ENCODE measurements at regions of chr7 and their contacts with region 1.

Region 1: DNA sequence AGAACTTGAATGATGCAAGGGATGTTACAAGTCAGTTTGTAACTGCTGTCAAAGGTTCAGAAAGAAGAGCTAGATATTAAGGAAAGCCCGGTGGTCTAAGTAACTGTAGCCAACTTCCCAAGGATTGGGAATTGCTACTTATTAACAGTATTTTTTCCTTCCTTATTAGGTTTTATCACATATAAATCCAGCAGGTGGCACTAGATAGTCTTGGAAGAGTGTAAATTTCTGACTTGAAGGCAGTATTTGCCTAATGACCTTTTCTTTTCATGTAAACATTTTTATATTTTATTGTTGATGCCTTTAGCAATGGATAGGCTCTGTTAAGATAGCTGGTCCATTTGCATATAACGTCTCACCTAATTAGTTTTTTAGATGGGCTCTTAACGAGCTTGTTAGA is 51.2 kb downstream of the ANLN start:
- DNase-seq: peak; percentile 38
- ATAC-seq: peak; percentile 55
- H3K4me3 ChIP-seq: no peak overlapping the region
- H3K27ac ChIP-seq: no peak overlapping the region
- H3K4me1 ChIP-seq: no peaks in the 10 kb centered on the region
- H3K27me3 ChIP-seq: no peaks in the 10 kb centered on the region
- CTCF ChIP-seq: peak; percentile 61

Region 2: GRCh38 chr7:36389371-36390198 is 51.3 kb before region 1 on chr7 and contains the start of gene ANLN:
- CTCF ChIA-PET with region 1: no interaction called
- POLR2A ChIA-PET with region 1: no interaction called
- intact Hi-C with region 1: no loop called
- DNase-seq: peak; percentile 94
- ATAC-seq: peak; percentile 68
- H3K4me3 ChIP-seq: peak within 1 kb of the TSS; percentile 90
- H3K27ac ChIP-seq: peak within 1 kb of the TSS; percentile 96
- H3K4me1 ChIP-seq: peaks cover 35% of the 10 kb centered on the region
- H3K27me3 ChIP-seq: no peaks in the 10 kb centered on the region
- CTCF ChIP-seq: no peak
- total RNA-seq, gene ANLN: 110 and 111 TPM in 2 replicates

Region 3: DNA sequence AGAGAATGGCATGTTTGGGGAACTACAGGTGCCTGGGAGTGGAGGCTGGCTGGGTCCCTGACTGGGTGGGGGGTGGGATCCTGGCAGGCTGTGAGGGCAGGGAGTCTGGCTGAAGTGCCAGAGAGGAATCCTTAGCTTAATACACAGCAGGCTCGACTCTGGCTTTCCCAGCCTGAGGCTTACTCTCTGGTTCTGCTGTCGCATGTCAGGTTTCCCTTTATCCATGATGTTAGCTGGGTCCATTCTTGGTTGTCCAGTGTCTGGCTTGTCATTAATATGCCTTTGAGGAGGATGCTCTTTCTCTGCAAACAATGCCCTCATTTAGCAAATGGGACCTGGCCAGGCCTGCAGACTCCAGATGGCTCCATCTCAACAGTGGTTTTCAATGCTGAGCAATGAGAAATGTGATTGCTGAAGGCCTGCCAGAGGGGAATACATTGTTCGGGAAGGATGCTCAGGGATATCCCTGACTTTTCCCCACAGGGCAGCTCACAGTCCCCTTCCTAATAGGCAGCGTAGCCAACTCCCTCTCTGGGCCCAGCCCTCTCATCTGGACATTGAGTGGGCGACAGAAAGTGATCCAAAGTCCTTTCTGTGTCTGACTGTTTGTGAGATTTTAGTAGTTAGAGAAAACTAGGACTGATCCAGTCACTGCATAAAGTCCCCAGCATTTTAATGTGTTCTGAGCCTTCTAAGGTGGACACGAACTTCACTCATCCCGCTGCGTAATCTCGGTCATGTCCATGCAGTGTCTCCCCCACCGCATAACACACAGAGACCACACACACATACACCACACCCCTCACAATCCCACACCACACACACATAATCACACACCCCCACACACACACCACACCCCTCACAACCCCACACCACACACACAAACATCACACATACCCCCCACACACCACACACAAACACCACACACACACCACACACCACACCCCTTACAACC is 73.7 kb after region 1 on chr7:
- CTCF ChIA-PET with region 1: no interaction called
- POLR2A ChIA-PET with region 1: no interaction called
- intact Hi-C with region 1: no loop called
- DNase-seq: no peak
- ATAC-seq: no peak
- H3K4me3 ChIP-seq: no peak overlapping the region
- H3K27ac ChIP-seq: no peak overlapping the region
- H3K4me1 ChIP-seq: no peaks in the 10 kb centered on the region
- H3K27me3 ChIP-seq: no peaks in the 10 kb centered on the region
- CTCF ChIP-seq: no peak

Region 4: GRCh38 chr7:36670585-36671431 is 229.9 kb after region 1 on chr7:
- CTCF ChIA-PET with region 1: no interaction called
- POLR2A ChIA-PET with region 1: no interaction called
- intact Hi-C with region 1: loop called (anchors 1 kb)
- DNase-seq: peak; percentile 82
- ATAC-seq: peak; percentile 78
- H3K4me3 ChIP-seq: no peak overlapping the region
- H3K27ac ChIP-seq: no peak overlapping the region
- H3K4me1 ChIP-seq: no peaks in the 10 kb centered on the region
- H3K27me3 ChIP-seq: peaks cover 15% of the 10 kb centered on the region; the same call in 1 of the 2 replicates
- CTCF ChIP-seq: peak; percentile 85

Region 5: DNA sequence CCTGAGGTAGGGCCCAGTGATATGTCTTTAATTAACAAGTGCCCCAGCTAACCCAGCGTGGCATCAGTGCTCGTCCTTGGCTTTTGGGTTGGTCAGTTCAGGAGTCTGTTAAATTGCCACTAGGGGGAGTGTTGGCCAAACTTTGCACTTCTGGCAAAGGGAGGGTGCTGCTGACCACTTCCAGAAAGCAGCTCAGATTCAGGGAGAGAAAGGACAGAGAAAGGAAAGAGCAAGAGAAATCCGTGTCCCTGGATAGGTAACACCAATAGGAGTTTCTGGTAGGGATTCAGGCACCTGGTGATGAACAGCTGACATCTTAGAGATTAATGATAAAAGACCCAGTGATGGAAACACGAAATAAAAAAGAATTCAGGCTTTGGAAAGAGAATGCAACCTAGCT is 526.5 kb after region 1 on chr7:
- CTCF ChIA-PET with region 1: no interaction called
- POLR2A ChIA-PET with region 1: no interaction called
- intact Hi-C with region 1: loop called (anchors 1 kb)
- DNase-seq: peak; percentile 70
- ATAC-seq: peak; percentile 99
- H3K4me3 ChIP-seq: no peak overlapping the region
- H3K27ac ChIP-seq: no peak overlapping the region
- H3K4me1 ChIP-seq: no peaks in the 10 kb centered on the region
- H3K27me3 ChIP-seq: 0 out of 2 replicates have a peak, but pooled peaks cover 13% of the 10 kb centered on the region
- CTCF ChIP-seq: peak; percentile 82

Measured in PC-3 (cell line).